PC-3 (cell line): ENCODE measurements at regions of chr1 and their contacts with region 1.

Region 1: GRCh38 chr1:43358746-43359693 is at the start of gene CDC20:
- DNase-seq: peak; percentile 99
- ATAC-seq: peak; percentile 94
- H3K4me3 ChIP-seq: peak within 1 kb of the TSS; percentile 93
- H3K27ac ChIP-seq: peak within 1 kb of the TSS; percentile 86
- H3K4me1 ChIP-seq: peaks cover 25% of the 10 kb centered on the region
- H3K27me3 ChIP-seq: no peaks in the 10 kb centered on the region
- CTCF ChIP-seq: no peak
- total RNA-seq, gene CDC20: 312 and 349 TPM in 2 replicates

Region 2: DNA sequence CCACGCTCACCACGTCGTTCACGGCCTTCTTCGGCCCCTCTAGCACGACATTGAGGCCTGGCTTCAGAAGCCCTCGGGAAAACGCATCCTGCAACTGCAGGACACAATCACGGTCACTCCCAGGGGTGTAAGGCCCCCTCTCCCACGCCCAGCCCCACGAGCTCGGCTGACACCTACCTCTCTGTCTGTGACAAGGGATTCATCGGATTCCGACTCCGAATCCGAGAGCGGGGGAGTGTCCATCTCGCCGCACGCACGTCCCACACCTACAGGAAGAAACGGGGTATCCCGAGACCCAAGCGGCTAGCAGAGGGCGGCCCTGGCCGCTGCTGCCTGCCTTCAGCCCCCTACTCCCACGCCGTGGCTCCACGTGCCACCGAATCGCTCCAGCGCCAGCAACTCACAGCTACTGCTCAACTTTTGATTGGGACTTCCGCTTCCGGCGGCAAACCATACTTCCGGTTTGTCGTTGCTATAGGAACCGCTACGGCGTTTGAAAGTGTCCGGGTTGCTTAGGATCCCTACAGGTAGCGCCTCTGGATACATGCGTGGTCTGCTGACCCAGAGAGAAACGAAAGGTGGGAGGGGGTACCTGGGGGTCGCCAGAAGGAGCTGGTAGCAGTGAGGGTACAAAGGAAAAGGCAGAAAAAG is 187.0 kb before region 1 on chr1 and contains the starts of genes CFAP57 and EBNA1BP2:
- CTCF ChIA-PET with region 1: no interaction called
- POLR2A ChIA-PET with region 1: no interaction called
- intact Hi-C with region 1: no loop called
- DNase-seq: peak; percentile 96
- ATAC-seq: peak; percentile 93
- H3K4me3 ChIP-seq: peak within 1 kb of the TSS; percentile 100
- H3K27ac ChIP-seq: peak within 1 kb of the TSS; percentile 21; the same call in 1 of the 2 replicates
- H3K4me1 ChIP-seq: peaks cover 12% of the 10 kb centered on the region
- H3K27me3 ChIP-seq: no peaks in the 10 kb centered on the region
- CTCF ChIP-seq: no peak
- total RNA-seq, gene CFAP57: 1.2 and 2.6 TPM in 2 replicates
- total RNA-seq, gene EBNA1BP2: 274 and 338 TPM in 2 replicates

Region 3: DNA sequence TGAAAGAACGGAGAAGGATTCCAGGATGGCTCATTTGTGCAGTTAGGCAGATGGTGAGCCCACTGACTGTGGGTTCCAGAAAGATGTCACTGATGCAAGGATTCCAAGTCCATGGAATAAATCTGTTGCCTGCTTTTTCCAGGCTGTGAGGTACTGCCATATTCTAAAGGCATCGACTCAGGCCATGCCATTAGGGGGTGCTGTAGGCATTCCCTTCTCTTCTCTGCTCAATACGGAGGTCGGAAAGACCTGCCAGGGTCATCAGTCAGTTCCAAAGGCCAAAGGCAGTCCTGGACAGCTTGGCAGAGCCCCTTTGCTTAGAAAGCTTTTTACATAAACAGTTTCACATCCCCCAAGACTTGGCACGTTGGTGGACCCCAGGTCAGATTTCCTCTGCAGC is 120.9 kb before region 1 on chr1:
- CTCF ChIA-PET with region 1: no interaction called
- POLR2A ChIA-PET with region 1: interaction called, 3 read pairs
- intact Hi-C with region 1: loop called (anchors 1 kb)
- DNase-seq: peak; percentile 74
- ATAC-seq: peak; percentile 53
- H3K4me3 ChIP-seq: no peak overlapping the region
- H3K27ac ChIP-seq: no peak overlapping the region
- H3K4me1 ChIP-seq: peaks cover 23% of the 10 kb centered on the region
- H3K27me3 ChIP-seq: no peaks in the 10 kb centered on the region
- CTCF ChIP-seq: peak; percentile 82

Region 4: GRCh38 chr1:43285269-43285990 is 73.6 kb before region 1 on chr1 and contains the start of gene C1orf210:
- CTCF ChIA-PET with region 1: interaction called, 14 read pairs
- POLR2A ChIA-PET with region 1: no interaction called
- intact Hi-C with region 1: no loop called
- DNase-seq: peak; percentile 90
- ATAC-seq: peak; percentile 90
- H3K4me3 ChIP-seq: peak within 1 kb of the TSS; percentile 61
- H3K27ac ChIP-seq: no peak within 1 kb of the TSS
- H3K4me1 ChIP-seq: peaks cover 16% of the 10 kb centered on the region
- H3K27me3 ChIP-seq: no peaks in the 10 kb centered on the region
- CTCF ChIP-seq: peak; percentile 65
- total RNA-seq, gene C1orf210: 10.4 and 17.8 TPM in 2 replicates

Region 5: DNA sequence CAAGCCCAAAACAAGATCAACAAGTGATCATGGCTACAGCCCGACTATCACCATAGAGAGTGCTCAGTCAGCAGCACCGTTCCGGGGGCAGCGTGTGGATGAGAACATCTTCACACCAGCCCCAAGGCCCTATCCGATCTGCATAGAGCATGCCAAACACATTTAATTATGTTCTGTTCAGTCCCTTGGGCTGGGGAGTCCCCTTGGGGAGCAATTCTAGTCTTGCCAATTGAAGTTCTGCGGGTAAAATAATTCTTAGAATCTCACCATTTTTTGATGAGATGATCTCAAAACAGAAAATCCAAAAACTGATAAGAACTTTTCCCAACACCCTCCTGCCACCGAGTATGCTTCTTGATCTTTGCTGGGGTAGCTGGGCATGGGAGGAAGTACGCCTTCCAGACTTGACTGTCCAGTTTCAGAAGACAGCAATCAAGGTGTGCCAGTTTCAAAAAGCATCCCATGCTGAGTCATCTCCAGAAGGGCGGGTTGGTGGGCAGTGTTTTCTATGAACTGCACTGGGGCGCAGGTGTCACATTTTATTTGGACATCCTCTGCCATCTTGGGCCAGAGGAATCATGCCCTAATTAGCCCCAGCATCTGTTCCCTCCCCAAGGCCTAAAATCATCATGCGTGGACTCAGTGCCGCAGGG is 150.8 kb after region 1 on chr1:
- CTCF ChIA-PET with region 1: no interaction called
- POLR2A ChIA-PET with region 1: no interaction called
- intact Hi-C with region 1: no loop called
- DNase-seq: peak; percentile 58
- ATAC-seq: peak; percentile 15; the same call in 1 of the 2 replicates
- H3K4me3 ChIP-seq: no peak overlapping the region
- H3K27ac ChIP-seq: no peak overlapping the region
- H3K4me1 ChIP-seq: peaks cover 12% of the 10 kb centered on the region
- H3K27me3 ChIP-seq: no peaks in the 10 kb centered on the region
- CTCF ChIP-seq: no peak